ENCODE measurements at regions of chr12 and their contacts with region 1.

Region 1: GRCh38 chr12:109154451-109155438 is 38.4 kb downstream of the ACACB start:
- DNase-seq: peak; percentile 76
- H3K4me3 ChIP-seq: peak overlapping the region; percentile 49 to 67 (median 66)
- H3K27ac ChIP-seq: no peak overlapping the region
- H3K4me1 ChIP-seq: peaks cover 13% of the 10 kb centered on the region
- H3K27me3 ChIP-seq: no peaks in the 10 kb centered on the region
- CTCF ChIP-seq: no peak

Region 2: GRCh38 chr12:109192358-109192757 is 37.6 kb after region 1 on chr12:
- CTCF ChIA-PET with region 1: no interaction called
- dilution Hi-C with region 1: no loop called
- in situ Hi-C with region 1: no loop called
- intact Hi-C with region 1: loop called (anchors 2 kb)
- DNase-seq: peak; percentile 83
- H3K4me3 ChIP-seq: no peak overlapping the region
- H3K27ac ChIP-seq: peak overlapping the region; percentile 79
- H3K4me1 ChIP-seq: peaks cover 20% of the 10 kb centered on the region
- H3K27me3 ChIP-seq: no peaks in the 10 kb centered on the region
- CTCF ChIP-seq: no peak

Region 3: DNA sequence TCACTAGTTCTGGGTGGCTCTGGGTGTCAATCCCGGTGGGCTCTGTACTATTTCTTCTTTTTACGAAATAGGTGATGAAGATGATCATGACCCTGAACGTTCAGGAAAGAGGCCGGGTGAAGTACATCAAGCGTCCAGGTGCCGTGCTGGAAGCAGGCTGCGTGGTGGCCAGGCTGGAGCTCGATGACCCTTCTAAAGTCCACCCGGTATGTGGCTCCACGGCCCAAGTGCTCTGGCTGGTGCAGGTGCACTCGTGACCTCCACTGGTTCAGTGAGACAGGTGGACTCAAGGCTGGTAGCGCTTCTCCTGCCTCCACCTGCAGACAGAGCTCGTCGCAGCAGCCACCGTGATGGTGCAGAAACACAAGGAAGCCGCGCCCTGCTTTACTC is 46.7 kb after region 1 on chr12:
- CTCF ChIA-PET with region 1: no interaction called
- dilution Hi-C with region 1: no loop called
- in situ Hi-C with region 1: no loop called
- intact Hi-C with region 1: loop called (anchors 2 kb)
- DNase-seq: no peak
- H3K4me3 ChIP-seq: no peak overlapping the region
- H3K27ac ChIP-seq: no peak overlapping the region
- H3K4me1 ChIP-seq: peaks cover 22% of the 10 kb centered on the region
- H3K27me3 ChIP-seq: no peaks in the 10 kb centered on the region
- CTCF ChIP-seq: no peak

Region 4: GRCh38 chr12:109680264-109681005 is 525.7 kb after region 1 on chr12:
- CTCF ChIA-PET with region 1: no interaction called
- dilution Hi-C with region 1: no loop called
- in situ Hi-C with region 1: no loop called
- intact Hi-C with region 1: no loop called
- DNase-seq: no peak
- H3K4me3 ChIP-seq: no peak overlapping the region
- H3K27ac ChIP-seq: no peak overlapping the region
- H3K4me1 ChIP-seq: no peaks in the 10 kb centered on the region
- H3K27me3 ChIP-seq: no peaks in the 10 kb centered on the region
- CTCF ChIP-seq: no peak

Measured in mammary epithelial cell (primary cell).